GM12878 (cell line): ENCODE measurements at regions of chr5 and their contacts with region 1.

Region 1: GRCh38 chr5:150801117-150801927 is 22.8 kb downstream of the SMIM3 start:
- DNase-seq: no peak
- ATAC-seq: peak; percentile 83
- H3K4me3 ChIP-seq: no peak overlapping the region
- H3K27ac ChIP-seq: no peak overlapping the region
- H3K4me1 ChIP-seq: no peaks in the 10 kb centered on the region
- H3K27me3 ChIP-seq: no peaks in the 10 kb centered on the region
- CTCF ChIP-seq: peak; percentile 49 to 60 (median 52); a peak in 5 of 6 replicates
- EP300 ChIP-seq: no peak
- POLR2A ChIP-seq: no peak
- RAD21 ChIP-seq: peak; percentile 61

Region 2: GRCh38 chr5:150789943-150790611 is 11.2 kb before region 1 on chr5:
- CTCF ChIA-PET with region 1: interaction called, 8 read pairs
- POLR2A ChIA-PET with region 1: no interaction called
- RAD21 ChIA-PET with region 1: no interaction called
- SMC1A ChIA-PET with region 1: interaction called, 10 read pairs
- in situ Hi-C with region 1: no loop called
- intact Hi-C with region 1: no loop called
- DNase-seq: peak; percentile 54
- ATAC-seq: peak; percentile 98
- H3K4me3 ChIP-seq: 0 out of 2 replicates have a peak overlapping the region, but pooled peaks have one; percentile 31
- H3K27ac ChIP-seq: peak overlapping the region; percentile 60
- H3K4me1 ChIP-seq: peaks cover 22% of the 10 kb centered on the region
- H3K27me3 ChIP-seq: no peaks in the 10 kb centered on the region
- CTCF ChIP-seq: no peak
- EP300 ChIP-seq: peak in 1 of 2 experiments; percentile 38; a peak in 1 of 4 replicates
- POLR2A ChIP-seq: no peak
- RAD21 ChIP-seq: no peak

Region 3: DNA sequence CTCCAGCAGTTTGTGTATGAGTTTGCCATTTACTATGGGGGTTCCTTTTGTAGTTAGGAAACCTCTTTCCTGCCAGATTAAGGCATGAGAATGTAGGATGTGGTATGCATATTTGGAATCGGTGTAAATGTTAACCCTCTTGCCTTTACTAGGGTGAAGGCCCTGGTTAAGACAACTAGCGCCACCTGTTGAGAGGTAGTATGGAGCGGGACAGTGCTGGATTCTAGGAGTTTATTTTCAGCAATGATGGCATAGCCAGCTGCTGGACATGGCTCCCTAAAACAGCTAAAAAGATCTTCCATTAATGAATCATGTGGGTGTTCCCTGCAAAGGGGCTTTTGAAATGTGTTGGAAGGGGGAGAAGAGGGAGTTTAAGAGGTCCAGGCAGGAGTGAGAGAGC is 188.4 kb after region 1 on chr5:
- CTCF ChIA-PET with region 1: interaction called, 5 read pairs
- POLR2A ChIA-PET with region 1: no interaction called
- RAD21 ChIA-PET with region 1: interaction called, 3 read pairs
- SMC1A ChIA-PET with region 1: no interaction called
- in situ Hi-C with region 1: no loop called
- intact Hi-C with region 1: loop called (anchors 10 kb)
- DNase-seq: no peak
- ATAC-seq: peak; percentile 80
- H3K4me3 ChIP-seq: no peak overlapping the region
- H3K27ac ChIP-seq: no peak overlapping the region
- H3K4me1 ChIP-seq: no peaks in the 10 kb centered on the region
- H3K27me3 ChIP-seq: no peaks in the 10 kb centered on the region
- CTCF ChIP-seq: peak; percentile 29 to 46 (median 38); a peak in 3 of 6 replicates
- EP300 ChIP-seq: no peak
- POLR2A ChIP-seq: no peak
- RAD21 ChIP-seq: peak; percentile 52